Dendritic cell treated with granulocyte-macrophage colony-stimulating factor and Interleukin-4, amounts not matched to agents 40 ng/mL and 50 ng/mL, for 4 days (primary cell): ENCODE measurements at regions of chr11 and their contacts with region 1.

Region 1: DNA sequence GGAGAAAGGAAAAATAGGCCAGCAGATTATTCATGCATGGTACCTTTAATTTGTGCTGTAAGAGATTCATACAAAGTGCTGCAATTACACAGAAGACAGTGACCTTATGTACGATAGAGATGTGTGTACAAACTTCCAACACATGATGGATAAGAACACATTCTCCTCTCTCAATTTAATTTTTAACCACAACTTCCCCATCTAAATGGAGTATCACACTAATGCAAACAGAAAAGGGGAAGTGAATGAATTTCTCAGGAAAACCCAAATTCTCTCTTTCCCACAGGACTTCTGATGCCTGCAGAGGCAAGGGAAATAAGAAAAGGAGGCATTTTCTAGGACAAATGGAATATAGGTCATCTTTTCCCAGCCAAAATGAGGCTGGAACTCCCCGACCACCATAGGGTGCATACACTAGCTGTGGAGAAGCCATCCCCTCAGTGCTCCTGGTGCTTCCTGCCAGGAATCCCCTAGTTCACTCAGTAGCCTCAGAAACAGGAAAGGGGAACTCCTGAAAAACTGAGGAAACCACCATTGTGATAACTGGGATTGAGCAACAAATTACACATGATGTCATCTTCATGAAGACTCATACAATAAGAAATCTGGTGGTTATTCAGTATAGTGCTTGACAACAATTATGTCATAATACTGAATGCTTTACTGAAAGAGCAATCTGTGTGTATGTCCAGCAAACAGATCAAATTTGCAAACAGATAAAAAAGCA is 22.4 kb downstream of the MMP10 start:
- H3K4me3 Mint-ChIP-seq: no peak overlapping the region
- H3K27ac Mint-ChIP-seq: peak overlapping the region; percentile 79
- H3K4me1 Mint-ChIP-seq: peaks cover 43% of the 10 kb centered on the region
- H3K27me3 Mint-ChIP-seq: peaks cover 56% of the 10 kb centered on the region

Region 2: DNA sequence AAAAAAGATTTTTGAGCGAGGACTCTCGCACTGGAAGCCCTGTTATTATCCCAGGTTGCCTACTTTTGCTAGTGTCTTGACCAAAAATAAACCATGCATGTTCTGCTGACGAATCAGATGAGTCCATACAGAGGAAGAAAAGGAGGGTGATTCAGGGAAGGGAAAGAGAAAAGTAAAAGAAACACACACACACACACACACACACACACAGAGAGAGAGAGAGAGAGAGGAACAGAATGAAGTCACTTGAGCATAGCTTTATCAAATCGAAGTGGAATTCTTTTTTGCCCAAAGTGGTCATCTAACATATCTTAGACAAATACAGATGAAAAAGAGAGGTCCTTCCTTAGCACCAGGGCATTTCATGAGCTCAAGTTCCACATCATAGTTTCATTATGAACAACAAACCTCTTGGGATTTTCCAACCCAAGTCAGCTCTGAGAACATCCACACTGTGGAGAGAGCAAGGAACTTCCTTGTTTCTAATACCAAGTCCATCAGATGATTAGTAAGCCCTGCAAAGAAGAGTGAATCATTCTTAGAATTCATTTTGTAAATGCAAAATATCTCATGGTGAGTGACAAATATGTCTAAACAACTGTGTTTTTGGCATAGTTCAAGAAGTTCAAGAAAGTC is 124.5 kb after region 1 on chr11:
- intact Hi-C with region 1: loop called (anchors 1 kb)
- H3K4me3 Mint-ChIP-seq: peak overlapping the region; percentile 2
- H3K27ac Mint-ChIP-seq: peak overlapping the region; percentile 95
- H3K4me1 Mint-ChIP-seq: peaks cover 53% of the 10 kb centered on the region
- H3K27me3 Mint-ChIP-seq: peaks cover 5% of the 10 kb centered on the region

Region 3: DNA sequence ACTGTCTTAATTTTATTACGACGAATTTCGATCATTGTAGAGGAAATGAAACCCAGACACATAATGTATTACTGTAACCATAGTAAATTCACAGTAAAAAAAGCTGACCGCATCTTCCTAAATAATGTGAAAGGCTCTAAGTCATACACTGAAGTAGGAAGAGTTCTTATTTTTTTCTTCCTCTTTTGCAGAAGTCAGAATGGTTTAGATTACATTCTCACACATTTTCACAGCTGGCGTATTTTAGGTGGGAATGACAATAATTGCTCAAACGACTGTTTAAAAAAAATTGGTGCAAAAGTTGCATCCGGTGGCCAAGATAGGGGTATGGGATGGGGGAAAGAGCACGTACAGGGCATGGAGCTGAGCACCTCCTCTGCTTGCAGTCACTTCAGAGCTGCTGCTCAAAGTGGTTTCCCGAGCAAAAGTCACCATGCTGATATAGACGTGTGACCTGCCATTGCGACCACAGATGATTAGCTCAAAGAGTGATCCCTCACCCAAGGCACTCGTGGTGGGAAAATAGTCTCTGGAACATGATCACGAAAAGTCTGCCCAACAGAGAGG is 162.2 kb after region 1 on chr11:
- intact Hi-C with region 1: loop called (anchors 1 kb)
- H3K4me3 Mint-ChIP-seq: peak overlapping the region; percentile 1
- H3K27ac Mint-ChIP-seq: no peak overlapping the region
- H3K4me1 Mint-ChIP-seq: peaks cover 57% of the 10 kb centered on the region
- H3K27me3 Mint-ChIP-seq: peaks cover 42% of the 10 kb centered on the region

Region 4: GRCh38 chr11:103183981-103184611 is 426.1 kb after region 1 on chr11:
- intact Hi-C with region 1: no loop called
- H3K4me3 Mint-ChIP-seq: no peak overlapping the region
- H3K27ac Mint-ChIP-seq: no peak overlapping the region
- H3K4me1 Mint-ChIP-seq: no peaks in the 10 kb centered on the region
- H3K27me3 Mint-ChIP-seq: no peaks in the 10 kb centered on the region